Caco-2 (cell line): ENCODE measurements at regions of chr15 and their contacts with region 1.

Region 1: DNA sequence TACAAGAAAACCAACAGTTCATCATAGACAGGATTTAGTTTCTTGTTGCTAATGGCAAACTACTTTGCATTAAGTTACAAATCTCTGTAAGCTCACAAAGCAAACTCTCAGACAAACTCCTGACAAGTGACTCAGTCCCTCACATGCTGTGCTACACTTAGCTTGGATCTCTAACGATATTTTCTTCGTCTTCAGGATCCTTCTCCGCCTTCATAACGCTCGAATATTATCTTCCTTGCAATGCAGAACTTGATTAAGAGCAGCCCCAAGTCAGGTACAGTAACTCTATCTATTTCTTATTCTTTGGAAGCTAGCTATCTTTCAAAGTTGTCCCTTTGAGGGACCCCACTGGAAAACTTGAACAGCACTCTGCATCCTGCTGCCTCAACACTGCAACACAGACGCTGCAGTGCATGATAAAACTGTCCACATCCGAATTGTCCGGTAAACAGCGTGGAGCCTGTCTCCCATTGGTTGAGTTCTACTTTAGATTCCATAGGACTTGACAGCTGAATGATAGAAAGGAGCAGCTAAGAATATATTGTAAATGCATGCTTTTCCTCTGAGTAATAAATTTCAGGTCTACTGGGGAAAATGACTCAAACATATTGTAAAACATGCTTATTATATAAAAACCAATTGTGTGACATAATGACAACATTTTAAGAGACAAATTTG is 61.3 kb downstream of the UACA start:
- DNase-seq: no peak
- H3K4me3 ChIP-seq: no peak overlapping the region
- H3K4me3 Mint-ChIP-seq: peak overlapping the region; percentile 62
- H3K27ac Mint-ChIP-seq: peak overlapping the region; percentile 64
- H3K4me1 ChIP-seq: peaks cover 82% of the 10 kb centered on the region
- H3K4me1 Mint-ChIP-seq: peaks cover 66% of the 10 kb centered on the region
- H3K27me3 ChIP-seq: no peaks in the 10 kb centered on the region
- H3K27me3 Mint-ChIP-seq: no peaks in the 10 kb centered on the region
- CTCF ChIP-seq: no peak

Region 2: GRCh38 chr15:70690491-70691257 is 11.4 kb before region 1 on chr15:
- CTCF ChIA-PET with region 1: no interaction called
- POLR2A ChIA-PET with region 1: no interaction called
- intact Hi-C with region 1: loop called (anchors 2 kb)
- DNase-seq: no peak
- H3K4me3 ChIP-seq: no peak overlapping the region
- H3K4me3 Mint-ChIP-seq: no peak overlapping the region
- H3K27ac Mint-ChIP-seq: no peak overlapping the region
- H3K4me1 ChIP-seq: peaks cover 30% of the 10 kb centered on the region
- H3K4me1 Mint-ChIP-seq: peaks cover 12% of the 10 kb centered on the region
- H3K27me3 ChIP-seq: no peaks in the 10 kb centered on the region
- H3K27me3 Mint-ChIP-seq: no peaks in the 10 kb centered on the region
- CTCF ChIP-seq: no peak

Region 3: GRCh38 chr15:70713714-70714414 is 11.8 kb after region 1 on chr15:
- CTCF ChIA-PET with region 1: interaction called, 4 read pairs
- POLR2A ChIA-PET with region 1: interaction called, 5 read pairs
- intact Hi-C with region 1: loop called (anchors 1 kb)
- DNase-seq: peak in 1 of 2 experiments; percentile 25
- H3K4me3 ChIP-seq: no peak overlapping the region
- H3K4me3 Mint-ChIP-seq: peak overlapping the region; percentile 60
- H3K27ac Mint-ChIP-seq: peak overlapping the region; percentile 34
- H3K4me1 ChIP-seq: peaks cover 89% of the 10 kb centered on the region
- H3K4me1 Mint-ChIP-seq: peaks cover 48% of the 10 kb centered on the region
- H3K27me3 ChIP-seq: no peaks in the 10 kb centered on the region
- H3K27me3 Mint-ChIP-seq: no peaks in the 10 kb centered on the region
- CTCF ChIP-seq: no peak

Region 4: GRCh38 chr15:70853821-70854666 is 152.0 kb after region 1 on chr15 and contains the start of gene LARP6:
- CTCF ChIA-PET with region 1: no interaction called
- POLR2A ChIA-PET with region 1: no interaction called
- intact Hi-C with region 1: no loop called
- DNase-seq: peak; percentile 58 to 80
- H3K4me3 ChIP-seq: peak within 1 kb of the TSS; percentile 81
- H3K4me3 Mint-ChIP-seq: peak within 1 kb of the TSS; percentile 94
- H3K27ac Mint-ChIP-seq: peak within 1 kb of the TSS; percentile 76
- H3K4me1 ChIP-seq: no peaks in the 10 kb centered on the region
- H3K4me1 Mint-ChIP-seq: peaks cover 9% of the 10 kb centered on the region
- H3K27me3 ChIP-seq: no peaks in the 10 kb centered on the region; the same call in 1 of the 2 replicates
- H3K27me3 Mint-ChIP-seq: no peaks in the 10 kb centered on the region
- CTCF ChIP-seq: no peak
- total RNA-seq, gene LARP6: 19.7 and 19.8 TPM in 2 replicates